SK-N-SH (cell line): ENCODE measurements at regions of chr17 and their contacts with region 1.

Region 1: DNA sequence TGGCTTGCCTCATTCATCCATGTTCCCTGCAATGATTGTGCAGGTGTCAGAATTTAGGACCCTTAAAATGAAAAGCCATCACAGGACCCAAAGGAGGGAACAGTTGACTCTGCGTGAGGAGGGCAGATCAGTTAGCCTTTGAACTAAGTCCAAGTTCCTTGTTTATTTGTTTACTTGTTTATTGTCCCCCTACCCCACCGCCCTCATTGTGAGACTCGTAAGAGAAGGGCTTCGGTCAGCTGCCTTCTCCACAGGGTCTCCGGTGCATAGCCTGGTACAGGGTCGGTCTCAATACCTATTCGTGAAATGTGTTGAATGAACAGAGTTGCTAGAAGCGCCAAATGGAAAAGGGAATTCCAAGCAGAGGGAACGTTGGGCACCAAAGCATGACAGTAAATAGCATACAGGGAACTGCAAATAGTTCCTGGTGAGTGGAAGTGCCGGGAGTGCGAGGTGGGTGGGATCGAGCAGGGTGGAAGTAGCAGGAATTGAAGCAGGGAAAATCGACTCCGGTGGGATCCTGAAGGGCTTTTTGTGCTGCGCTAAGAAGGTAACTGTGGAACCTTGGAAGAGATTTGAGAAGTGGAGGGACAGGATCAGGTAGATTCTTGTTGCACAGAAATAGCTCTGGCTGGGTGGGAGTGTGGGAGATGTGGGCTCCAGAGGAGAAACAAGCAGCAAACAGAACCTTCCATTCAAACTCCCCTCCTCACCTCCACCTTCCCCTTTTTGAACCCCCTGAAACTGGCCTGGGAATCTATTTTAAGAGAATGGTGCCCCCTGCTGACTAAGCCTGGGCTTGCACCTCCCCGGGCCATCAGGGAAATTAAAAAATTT is 12.7 kb downstream of the SLC35B1 start:
- DNase-seq: peak; percentile 82
- H3K4me3 ChIP-seq: no peak overlapping the region; a peak in 1 of 4 replicates
- H3K27ac ChIP-seq: no peak overlapping the region
- H3K4me1 ChIP-seq: peaks cover 0 to 2% of the 10 kb centered on the region in 2 experiments; a peak in 1 of 4 replicates
- H3K27me3 ChIP-seq: no peaks in the 10 kb centered on the region
- CTCF ChIP-seq: peak; percentile 100
- EP300 ChIP-seq: no peak
- RAD21 ChIP-seq: peak; percentile 98

Region 2: GRCh38 chr17:49674507-49674906 is 20.6 kb before region 1 on chr17:
- CTCF ChIA-PET with region 1: interaction called, 43 read pairs
- POLR2A ChIA-PET with region 1: no interaction called
- DNase-seq: no peak
- H3K4me3 ChIP-seq: no peak overlapping the region
- H3K27ac ChIP-seq: peak overlapping the region in 1 of 2 experiments; percentile 17; a peak in 1 of 4 replicates
- H3K4me1 ChIP-seq: peaks cover 9 to 13% of the 10 kb centered on the region in 2 experiments; a peak in 3 of 4 replicates
- H3K27me3 ChIP-seq: no peaks in the 10 kb centered on the region
- CTCF ChIP-seq: no peak
- EP300 ChIP-seq: no peak
- RAD21 ChIP-seq: no peak

Region 3: DNA sequence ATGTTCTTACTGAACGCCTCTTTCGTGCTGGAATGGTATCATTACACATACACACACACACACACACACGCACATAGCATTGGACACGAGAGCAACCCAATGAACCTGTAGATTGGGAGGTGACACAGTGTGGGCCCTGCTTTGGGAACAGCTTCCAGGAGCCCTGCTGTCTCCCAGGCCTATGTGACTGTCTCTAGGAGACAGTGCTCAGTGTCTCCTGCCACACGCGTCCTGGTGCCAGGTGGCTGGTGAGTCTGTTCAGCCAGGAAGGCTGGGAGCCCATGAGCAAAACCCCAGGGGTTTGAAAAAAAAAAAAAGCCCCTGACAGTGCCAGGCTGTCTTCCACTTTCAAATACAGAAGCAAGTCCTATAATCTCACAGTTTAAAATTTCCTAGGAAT is 14.8 kb before region 1 on chr17:
- CTCF ChIA-PET with region 1: interaction called, 43 read pairs
- POLR2A ChIA-PET with region 1: no interaction called
- DNase-seq: no peak
- H3K4me3 ChIP-seq: no peak overlapping the region
- H3K27ac ChIP-seq: no peak overlapping the region
- H3K4me1 ChIP-seq: peaks cover 11 to 13% of the 10 kb centered on the region in 2 experiments; a peak in 3 of 4 replicates
- H3K27me3 ChIP-seq: no peaks in the 10 kb centered on the region
- CTCF ChIP-seq: no peak
- EP300 ChIP-seq: no peak
- RAD21 ChIP-seq: no peak

Region 4: DNA sequence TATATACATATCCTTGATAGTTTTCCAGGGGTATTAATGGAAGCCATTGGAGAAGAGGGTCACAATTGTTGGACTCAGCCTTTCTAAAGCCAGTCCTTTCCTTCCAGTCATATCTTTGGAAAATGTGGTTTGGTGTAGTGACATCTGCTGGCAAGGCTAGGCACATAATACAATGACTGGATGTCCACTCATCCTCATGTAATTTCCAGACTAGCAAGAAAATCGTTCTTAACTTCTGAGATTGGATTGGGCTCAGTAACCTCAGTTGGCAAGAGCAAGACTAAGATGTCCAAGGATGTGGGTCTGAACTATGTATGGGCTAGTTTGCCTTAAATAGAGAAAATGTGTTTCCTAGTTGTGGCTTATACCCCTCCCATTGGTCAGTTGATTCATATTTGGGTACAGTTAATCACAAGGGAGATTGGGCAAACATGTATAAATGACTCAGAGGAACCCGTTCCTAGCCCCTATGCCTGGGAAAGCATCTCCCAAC is 84.7 kb after region 1 on chr17:
- CTCF ChIA-PET with region 1: interaction called, 10 read pairs
- POLR2A ChIA-PET with region 1: no interaction called
- DNase-seq: peak; percentile 40
- H3K4me3 ChIP-seq: no peak overlapping the region
- H3K27ac ChIP-seq: 0 out of 4 replicates have a peak overlapping the region, but pooled peaks of 1 of the 2 experiments have one; percentile 3
- H3K4me1 ChIP-seq: no peaks in the 10 kb centered on the region; a peak in 1 of 4 replicates
- H3K27me3 ChIP-seq: peaks cover 8% of the 10 kb centered on the region; the same call in 1 of the 2 replicates
- CTCF ChIP-seq: peak; percentile 74
- EP300 ChIP-seq: no peak
- RAD21 ChIP-seq: peak; percentile 71

Region 5: GRCh38 chr17:49830605-49831004 is 135.5 kb after region 1 on chr17:
- CTCF ChIA-PET with region 1: no interaction called
- POLR2A ChIA-PET with region 1: no interaction called
- DNase-seq: no peak
- H3K4me3 ChIP-seq: no peak overlapping the region
- H3K27ac ChIP-seq: peak overlapping the region in 1 of 2 experiments; percentile 1; a peak in 1 of 4 replicates
- H3K4me1 ChIP-seq: peaks cover 0 to 10% of the 10 kb centered on the region in 2 experiments; a peak in 1 of 4 replicates
- H3K27me3 ChIP-seq: no peaks in the 10 kb centered on the region
- CTCF ChIP-seq: no peak
- EP300 ChIP-seq: no peak
- RAD21 ChIP-seq: no peak